ENCODE measurements at regions of chr11 and their contacts with region 1.

Region 1: DNA sequence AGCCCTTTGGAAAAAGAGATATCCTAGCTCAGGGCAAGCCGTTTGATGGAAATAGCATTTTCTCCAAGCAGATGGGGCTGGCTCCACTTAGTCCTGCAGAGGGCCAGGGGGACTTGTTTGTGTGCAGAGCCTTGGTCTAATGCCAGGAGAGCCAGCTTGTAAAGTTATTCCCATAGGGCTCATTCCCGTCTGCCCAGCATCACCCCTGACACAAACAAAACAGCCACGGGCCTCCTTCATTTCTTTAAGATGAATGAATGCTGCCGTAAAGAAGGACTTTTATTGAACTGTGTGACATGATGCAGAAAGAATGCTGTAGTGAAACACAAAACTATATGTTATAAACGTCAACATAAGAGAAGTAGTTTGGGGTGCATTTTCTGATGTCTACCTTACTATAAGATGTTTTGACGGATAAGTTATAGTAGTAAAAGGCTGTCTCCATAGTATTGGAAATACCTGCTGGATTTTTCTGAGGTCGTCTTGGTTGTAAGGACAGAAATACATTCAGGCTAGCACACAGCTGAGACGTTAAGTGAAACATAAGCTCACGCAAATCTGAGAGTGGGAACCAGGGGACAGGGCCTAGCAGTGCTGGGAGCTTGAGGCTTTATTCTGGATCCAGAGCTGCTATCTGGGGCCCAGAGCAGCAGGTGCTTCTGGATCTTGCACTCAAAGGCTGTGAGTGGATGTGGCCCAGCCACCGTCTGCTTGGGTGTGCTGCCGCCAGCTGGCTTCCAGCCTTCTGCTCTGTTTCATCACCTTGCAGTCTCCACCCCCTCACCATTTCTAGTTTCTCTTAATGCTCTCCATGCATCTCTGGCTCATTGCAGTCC is 53.3 kb downstream of the NCAM1 start:
- DNase-seq: peak; percentile 80
- ATAC-seq: peak; percentile 95

Region 2: DNA sequence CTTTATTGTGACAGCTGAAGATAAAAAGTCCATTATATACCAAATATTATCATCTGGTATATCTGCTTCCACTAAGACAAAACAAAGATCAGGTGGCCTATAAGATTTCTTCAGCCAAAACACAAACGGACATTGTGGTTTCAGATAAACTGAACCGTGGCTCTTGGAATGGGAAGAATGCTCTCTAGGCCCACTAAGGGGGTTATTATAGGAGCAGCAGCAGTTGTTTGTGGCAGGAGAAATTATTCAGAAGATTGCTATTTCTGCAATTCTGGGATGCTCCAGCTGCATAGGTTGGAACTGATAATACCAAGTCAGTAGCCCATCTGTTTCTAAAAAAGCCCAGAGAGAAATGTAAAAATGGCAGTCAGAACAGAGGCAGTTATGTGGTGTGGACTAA is 92.0 kb after region 1 on chr11:
- intact Hi-C with region 1: loop called (anchors 10 kb)
- DNase-seq: no peak
- ATAC-seq: no peak

Measured in Right ventricle myocardium inferior (tissue), 1 donor.